Activated CD8-positive, alpha-beta T cell treated with anti-CD3 and anti-CD28 coated beads, Interleukin-2, amount 10 ng/mL, durations not matched to agents 7 days and 5 days (primary cell): ENCODE measurements at regions of chr5 and their contacts with region 1.

Region 1: DNA sequence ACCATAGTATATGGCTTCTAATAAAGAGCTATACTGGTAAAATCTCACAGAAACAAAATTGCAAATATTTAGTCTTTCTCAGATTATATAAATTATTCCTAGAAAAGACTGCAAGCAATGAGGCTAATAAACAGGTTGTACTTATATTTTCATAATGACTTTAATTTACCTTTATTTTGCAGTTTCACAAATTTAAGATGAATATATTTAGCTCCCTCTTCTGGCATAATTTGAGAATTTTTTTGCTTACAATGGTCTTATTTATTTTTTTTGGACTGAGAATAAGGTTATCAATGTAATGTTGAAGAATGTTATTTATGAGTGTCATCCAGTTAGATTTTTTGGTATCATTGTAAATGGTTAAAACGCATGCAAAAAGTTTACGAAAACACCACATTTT is 56.7 kb downstream of the PIK3R1 start:
- DNase-seq: no peak
- ATAC-seq: no peak
- H3K4me3 Mint-ChIP-seq: no peak overlapping the region
- H3K27ac Mint-ChIP-seq: no peak overlapping the region
- H3K4me1 Mint-ChIP-seq: peaks cover 66% of the 10 kb centered on the region
- H3K27me3 Mint-ChIP-seq: no peaks in the 10 kb centered on the region

Region 2: GRCh38 chr5:68252673-68253623 is 19.3 kb before region 1 on chr5:
- CTCF ChIA-PET with region 1: interaction called, 45 read pairs
- POLR2A ChIA-PET with region 1: interaction called, 4 read pairs
- DNase-seq: peak; percentile 54
- ATAC-seq: peak; percentile 40
- H3K4me3 Mint-ChIP-seq: no peak overlapping the region
- H3K27ac Mint-ChIP-seq: no peak overlapping the region
- H3K4me1 Mint-ChIP-seq: peaks cover 76% of the 10 kb centered on the region
- H3K27me3 Mint-ChIP-seq: no peaks in the 10 kb centered on the region

Region 3: DNA sequence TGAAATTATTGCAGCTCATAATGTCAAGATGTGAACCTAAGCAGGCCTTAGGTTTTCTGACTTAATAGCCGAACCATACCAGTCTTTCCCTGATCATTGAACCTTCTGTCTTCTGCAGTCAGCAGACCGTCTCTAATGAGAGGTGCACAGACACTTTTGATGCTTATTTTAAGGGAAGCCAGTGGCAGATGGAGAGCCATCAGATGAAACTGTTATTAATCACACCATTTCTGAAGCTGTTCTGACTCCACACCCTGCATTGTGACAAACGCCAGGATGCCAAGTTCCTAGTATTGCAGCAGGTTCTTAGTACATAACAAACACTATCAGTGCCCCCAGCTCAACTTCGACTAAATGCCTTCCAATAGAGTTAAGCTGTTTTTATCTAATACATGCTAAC is 13.8 kb before region 1 on chr5:
- CTCF ChIA-PET with region 1: interaction called, 45 read pairs
- POLR2A ChIA-PET with region 1: interaction called, 4 read pairs
- DNase-seq: no peak
- ATAC-seq: no peak
- H3K4me3 Mint-ChIP-seq: no peak overlapping the region
- H3K27ac Mint-ChIP-seq: no peak overlapping the region
- H3K4me1 Mint-ChIP-seq: peaks cover 59% of the 10 kb centered on the region
- H3K27me3 Mint-ChIP-seq: no peaks in the 10 kb centered on the region

Region 4: GRCh38 chr5:68306361-68307014 is 34.2 kb after region 1 on chr5:
- CTCF ChIA-PET with region 1: no interaction called
- POLR2A ChIA-PET with region 1: no interaction called
- DNase-seq: no peak
- ATAC-seq: no peak
- H3K4me3 Mint-ChIP-seq: no peak overlapping the region
- H3K27ac Mint-ChIP-seq: no peak overlapping the region
- H3K4me1 Mint-ChIP-seq: peaks cover 15% of the 10 kb centered on the region
- H3K27me3 Mint-ChIP-seq: peaks cover 5% of the 10 kb centered on the region

Region 5: GRCh38 chr5:68343421-68343826 is 71.1 kb after region 1 on chr5:
- CTCF ChIA-PET with region 1: no interaction called
- POLR2A ChIA-PET with region 1: no interaction called
- DNase-seq: peak; percentile 25
- ATAC-seq: peak; percentile 63
- H3K4me3 Mint-ChIP-seq: no peak overlapping the region
- H3K27ac Mint-ChIP-seq: no peak overlapping the region
- H3K4me1 Mint-ChIP-seq: peaks cover 42% of the 10 kb centered on the region
- H3K27me3 Mint-ChIP-seq: peaks cover 11% of the 10 kb centered on the region